ENCODE measurements at regions of chr21 and their contacts with region 1.

Region 1: DNA sequence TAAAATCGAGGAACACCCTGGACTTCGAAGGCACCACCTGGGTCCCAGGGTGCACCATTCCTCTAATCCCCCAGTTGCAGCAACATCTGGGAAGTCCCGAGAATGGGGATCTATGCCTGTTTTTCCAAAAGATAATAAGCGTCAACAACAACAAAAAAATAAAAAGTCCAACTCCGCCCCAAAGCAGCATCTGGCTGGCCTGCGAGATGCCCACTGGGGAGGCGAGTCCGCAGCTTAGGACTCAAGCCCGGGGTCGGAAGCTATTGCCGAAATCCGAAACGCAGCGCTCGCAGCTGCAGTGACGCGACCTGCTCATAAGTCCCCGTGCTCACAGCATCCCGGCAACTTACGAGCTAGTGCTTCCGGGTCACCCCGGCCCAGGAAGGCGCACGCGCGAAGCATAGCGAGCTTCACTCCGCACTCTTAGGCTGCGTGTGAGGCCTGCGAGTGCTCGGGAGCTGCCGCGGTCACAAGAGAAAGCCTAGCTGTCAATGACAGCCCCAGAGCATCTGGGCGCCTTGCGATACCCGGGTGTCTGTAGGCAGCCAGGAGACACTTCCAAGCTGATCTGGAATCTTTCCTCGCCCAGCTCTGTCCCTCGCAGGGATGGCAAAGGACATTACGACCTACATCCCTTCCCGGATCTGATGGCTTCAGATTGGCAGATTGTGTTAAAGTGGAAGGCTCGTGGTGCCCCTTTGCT is 9.9 kb upstream of the LTN1 start:
- DNase-seq: peak; percentile 96 to 98 (median 98)
- H3K4me3 ChIP-seq: peak overlapping the region; percentile 53 to 79 (median 72)
- H3K4me3 Mint-ChIP-seq: peak overlapping the region; percentile 82 to 92
- H3K27ac ChIP-seq: peak overlapping the region; percentile 92 to 93
- H3K27ac Mint-ChIP-seq: peak overlapping the region; percentile 93 to 97 (median 97)
- H3K4me1 ChIP-seq: peaks cover 8% of the 10 kb centered on the region in 2 donors
- H3K4me1 Mint-ChIP-seq: peaks cover 2% of the 10 kb centered on the region
- H3K27me3 ChIP-seq: no peaks in the 10 kb centered on the region
- H3K27me3 Mint-ChIP-seq: peaks cover 0 to 3% (median 3%) of the 10 kb centered on the region in 3 donors
- CTCF ChIP-seq: no peak

Region 2: GRCh38 chr21:29024474-29025327 is 22.1 kb after region 1 on chr21 and contains the start of gene USP16:
- intact Hi-C with region 1: loop called (anchors 2 kb)
- DNase-seq: peak; percentile 96
- H3K4me3 ChIP-seq: peak within 1 kb of the TSS; percentile 78 to 89 (median 83)
- H3K4me3 Mint-ChIP-seq: peak within 1 kb of the TSS; percentile 98 to 99
- H3K27ac ChIP-seq: peak within 1 kb of the TSS; percentile 97 to 99
- H3K27ac Mint-ChIP-seq: peak within 1 kb of the TSS; percentile 99 to 100 (median 100)
- H3K4me1 ChIP-seq: peaks cover 14 to 22% of the 10 kb centered on the region in 2 donors
- H3K4me1 Mint-ChIP-seq: peaks cover 27% of the 10 kb centered on the region
- H3K27me3 ChIP-seq: no peaks in the 10 kb centered on the region
- H3K27me3 Mint-ChIP-seq: peaks cover 0 to 2% (median 0%) of the 10 kb centered on the region in 3 donors
- CTCF ChIP-seq: no peak
- polyA plus RNA-seq, gene USP16: 11.6 to 23.6 (median 16.2) TPM

Region 3: GRCh38 chr21:29034678-29035077 is 32.1 kb after region 1 on chr21:
- intact Hi-C with region 1: loop called in 1 of 2 experiments (anchors 5 kb)
- DNase-seq: no peak
- H3K4me3 ChIP-seq: no peak overlapping the region
- H3K4me3 Mint-ChIP-seq: no peak overlapping the region
- H3K27ac ChIP-seq: no peak overlapping the region
- H3K27ac Mint-ChIP-seq: no peak overlapping the region
- H3K4me1 ChIP-seq: no peaks in the 10 kb centered on the region
- H3K4me1 Mint-ChIP-seq: no peaks in the 10 kb centered on the region
- H3K27me3 ChIP-seq: no peaks in the 10 kb centered on the region
- H3K27me3 Mint-ChIP-seq: no peaks in the 10 kb centered on the region
- CTCF ChIP-seq: no peak